ENCODE measurements at regions of chr4 and their contacts with region 1.

Region 1: GRCh38 chr4:48698029-48698971 is 81.8 kb downstream of the FRYL start:
- DNase-seq: peak; percentile 87
- H3K4me3 ChIP-seq: no peak overlapping the region
- H3K27ac ChIP-seq: peak overlapping the region; percentile 85
- H3K4me1 ChIP-seq: peaks cover 28% of the 10 kb centered on the region
- H3K27me3 ChIP-seq: no peaks in the 10 kb centered on the region
- CTCF ChIP-seq: no peak
- POLR2A ChIP-seq: no peak

Region 2: GRCh38 chr4:48722509-48723446 is 24.5 kb after region 1 on chr4:
- CTCF ChIA-PET with region 1: interaction called, 3 read pairs
- POLR2A ChIA-PET with region 1: no interaction called
- dilution Hi-C with region 1: no loop called
- intact Hi-C with region 1: loop called (anchors 2 kb)
- DNase-seq: peak; percentile 83
- H3K4me3 ChIP-seq: peak overlapping the region in 1 of 3 experiments; percentile 32
- H3K27ac ChIP-seq: peak overlapping the region; percentile 71
- H3K4me1 ChIP-seq: peaks cover 45% of the 10 kb centered on the region
- H3K27me3 ChIP-seq: no peaks in the 10 kb centered on the region
- CTCF ChIP-seq: no peak
- POLR2A ChIP-seq: no peak

Region 3: GRCh38 chr4:48748949-48749596 is 50.8 kb after region 1 on chr4:
- CTCF ChIA-PET with region 1: interaction called, 3 read pairs
- POLR2A ChIA-PET with region 1: no interaction called
- dilution Hi-C with region 1: no loop called
- intact Hi-C with region 1: loop called (anchors 1 kb)
- DNase-seq: no peak
- H3K4me3 ChIP-seq: no peak overlapping the region
- H3K27ac ChIP-seq: no peak overlapping the region
- H3K4me1 ChIP-seq: peaks cover 29% of the 10 kb centered on the region
- H3K27me3 ChIP-seq: no peaks in the 10 kb centered on the region
- CTCF ChIP-seq: no peak
- POLR2A ChIP-seq: no peak

Measured in endothelial cell of umbilical vein (primary cell).